Activated B cell treated with CpG ODN at 0.5 μM for 24 hours (primary cell): ENCODE measurements at regions of chr6 and their contacts with region 1.

Region 1: DNA sequence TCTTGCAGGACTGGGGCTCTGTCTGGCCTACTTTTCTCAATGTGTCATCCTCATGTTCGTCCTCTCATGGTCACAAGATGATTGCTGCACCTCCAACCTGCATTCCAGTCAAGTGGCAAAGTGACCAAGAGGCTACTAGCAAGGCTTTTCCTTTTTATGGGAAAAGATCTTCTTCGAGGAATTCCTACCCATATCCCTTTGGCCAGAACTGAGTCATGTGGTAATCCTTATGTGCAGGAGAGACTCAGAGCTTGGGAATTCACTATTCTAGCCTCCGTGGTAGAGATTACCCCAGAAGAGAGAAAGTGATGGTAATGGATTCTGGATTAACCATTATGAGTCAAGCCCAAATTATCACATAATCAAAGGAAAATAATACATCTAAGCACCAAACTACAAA is 162.7 kb downstream of the KCNQ5 start:
- DNase-seq: no peak
- ATAC-seq: no peak
- H3K4me3 Mint-ChIP-seq: no peak overlapping the region
- H3K27ac Mint-ChIP-seq: no peak overlapping the region
- H3K4me1 Mint-ChIP-seq: no peaks in the 10 kb centered on the region
- H3K27me3 Mint-ChIP-seq: no peaks in the 10 kb centered on the region
- CTCF ChIP-seq: no peak

Region 2: DNA sequence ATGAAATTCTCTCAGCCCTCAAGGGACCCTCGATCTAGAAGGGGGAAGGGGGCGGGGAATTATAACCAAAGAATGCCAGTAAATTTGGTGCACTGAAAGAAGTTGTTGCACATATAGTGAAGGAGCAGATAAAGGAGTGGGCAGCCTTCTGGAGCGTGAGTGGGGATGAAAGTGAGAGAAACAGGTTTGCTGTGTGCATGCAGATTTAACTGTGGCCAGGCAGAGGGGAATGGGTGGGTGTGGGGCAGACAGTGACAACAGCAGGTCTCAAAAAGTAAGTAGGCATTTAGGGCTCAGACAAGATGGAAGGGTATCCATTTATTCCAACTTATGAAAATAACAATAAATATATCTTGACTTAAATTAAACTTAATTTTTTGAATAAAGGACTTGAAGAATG is 13.6 kb before region 1 on chr6:
- CTCF ChIA-PET with region 1: no interaction called
- POLR2A ChIA-PET with region 1: no interaction called
- intact Hi-C with region 1: loop called (anchors 1 kb)
- DNase-seq: no peak
- ATAC-seq: no peak
- H3K4me3 Mint-ChIP-seq: peak overlapping the region; percentile 36
- H3K27ac Mint-ChIP-seq: no peak overlapping the region
- H3K4me1 Mint-ChIP-seq: peaks cover 26% of the 10 kb centered on the region
- H3K27me3 Mint-ChIP-seq: no peaks in the 10 kb centered on the region
- CTCF ChIP-seq: no peak